WTC11 (cell line): ENCODE measurements at regions of chr10 and their contacts with region 1.

Region 1: DNA sequence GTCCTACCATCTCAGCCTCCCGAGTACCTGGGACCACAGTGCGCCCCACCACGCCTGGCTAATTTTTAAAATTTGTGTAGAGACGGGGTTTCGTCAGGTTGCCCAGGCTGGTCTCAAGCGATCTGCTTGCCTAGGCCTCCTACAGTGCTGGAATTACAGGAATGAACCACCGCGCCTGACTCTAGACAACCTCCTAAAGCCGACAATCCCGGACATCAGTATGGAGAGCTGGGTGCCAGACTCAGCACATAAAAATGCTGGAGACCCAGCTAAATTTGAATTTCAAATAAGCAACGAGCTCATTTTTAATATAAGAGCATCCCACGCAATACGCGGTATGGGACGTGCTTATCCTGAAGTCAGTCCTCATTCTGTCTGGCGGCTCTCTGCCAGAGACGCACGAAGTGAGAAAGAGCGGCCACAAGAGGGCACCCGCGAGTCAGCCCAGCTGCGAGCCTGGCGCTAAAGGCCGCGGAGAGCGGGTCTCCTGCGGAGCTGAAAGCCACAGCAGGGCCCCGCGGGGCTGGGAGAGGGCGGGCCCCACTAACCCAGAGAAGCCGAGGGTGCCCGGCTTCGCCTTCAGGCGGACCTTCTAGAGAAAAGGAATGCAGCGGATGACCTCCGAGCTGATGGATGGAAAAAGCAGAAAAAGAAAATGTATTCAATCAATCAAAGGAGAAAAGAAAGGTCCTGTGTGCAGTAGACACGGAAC is 7.0 kb downstream of the CALY start:
- DNase-seq: peak; percentile 90
- ATAC-seq: peak; percentile 81
- H3K4me3 Mint-ChIP-seq: peak overlapping the region; percentile 22
- H3K27ac Mint-ChIP-seq: no peak overlapping the region
- H3K4me1 Mint-ChIP-seq: peaks cover 14% of the 10 kb centered on the region
- H3K27me3 Mint-ChIP-seq: peaks cover 88% of the 10 kb centered on the region
- CTCF ChIP-seq: peak; percentile 95

Region 2: GRCh38 chr10:133210398-133211140 is 119.1 kb before region 1 on chr10:
- CTCF ChIA-PET with region 1: no interaction called
- POLR2A ChIA-PET with region 1: no interaction called
- DNase-seq: no peak
- ATAC-seq: no peak
- H3K4me3 Mint-ChIP-seq: no peak overlapping the region
- H3K27ac Mint-ChIP-seq: no peak overlapping the region
- H3K4me1 Mint-ChIP-seq: no peaks in the 10 kb centered on the region
- H3K27me3 Mint-ChIP-seq: no peaks in the 10 kb centered on the region
- CTCF ChIP-seq: no peak

Region 3: DNA sequence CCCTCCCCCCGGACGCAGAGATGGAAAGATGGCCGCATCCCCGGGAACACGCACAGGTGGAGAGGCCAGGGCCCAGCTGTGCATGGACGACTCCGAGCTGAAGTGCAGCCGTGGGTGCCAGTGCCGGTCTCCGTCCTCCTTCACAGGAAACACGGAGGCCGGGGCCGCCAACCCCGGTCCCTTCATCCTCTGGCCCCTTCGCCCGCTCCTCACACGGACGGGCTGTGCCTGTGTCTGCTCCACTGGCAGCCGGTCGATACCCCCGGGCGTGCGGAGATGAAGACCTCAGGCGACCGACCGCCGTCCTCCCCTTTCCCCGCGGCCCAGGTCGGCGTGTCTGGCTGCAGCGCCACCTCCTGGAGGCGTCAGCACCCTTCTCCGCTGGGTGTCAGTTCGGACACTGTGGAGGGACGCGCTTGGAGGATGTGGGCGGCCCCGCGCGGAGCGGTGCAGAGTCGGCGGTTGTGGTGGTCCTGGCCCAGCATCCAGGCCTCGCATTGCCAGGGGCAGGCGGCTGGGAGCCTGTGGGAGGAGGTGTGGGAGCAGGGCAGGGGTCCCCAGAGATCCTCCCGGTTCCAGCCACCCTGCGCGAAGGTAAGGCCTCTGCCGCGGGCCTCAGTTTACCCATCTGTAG is 11.0 kb before region 1 on chr10:
- CTCF ChIA-PET with region 1: interaction called, 20 read pairs
- POLR2A ChIA-PET with region 1: no interaction called
- DNase-seq: peak; percentile 86
- ATAC-seq: peak; percentile 98
- H3K4me3 Mint-ChIP-seq: peak overlapping the region; percentile 58
- H3K27ac Mint-ChIP-seq: no peak overlapping the region
- H3K4me1 Mint-ChIP-seq: 0 out of 2 replicates have a peak, but pooled peaks cover 3% of the 10 kb centered on the region
- H3K27me3 Mint-ChIP-seq: peaks cover 26% of the 10 kb centered on the region
- CTCF ChIP-seq: peak; percentile 74

Region 4: GRCh38 chr10:133351408-133352318 is 22.0 kb after region 1 on chr10:
- CTCF ChIA-PET with region 1: interaction called, 26 read pairs
- POLR2A ChIA-PET with region 1: no interaction called
- DNase-seq: peak; percentile 59
- ATAC-seq: peak; percentile 44
- H3K4me3 Mint-ChIP-seq: no peak overlapping the region
- H3K27ac Mint-ChIP-seq: no peak overlapping the region
- H3K4me1 Mint-ChIP-seq: peaks cover 4% of the 10 kb centered on the region
- H3K27me3 Mint-ChIP-seq: peaks cover 2% of the 10 kb centered on the region; the same call in 1 of the 2 replicates
- CTCF ChIP-seq: no peak

Region 5: GRCh38 chr10:133357285-133358151 is 27.9 kb after region 1 on chr10 and contains the start of gene FUOM:
- CTCF ChIA-PET with region 1: interaction called, 26 read pairs
- POLR2A ChIA-PET with region 1: no interaction called
- DNase-seq: peak; percentile 82
- ATAC-seq: peak; percentile 87
- H3K4me3 Mint-ChIP-seq: peak within 1 kb of the TSS; percentile 72
- H3K27ac Mint-ChIP-seq: no peak within 1 kb of the TSS
- H3K4me1 Mint-ChIP-seq: no peaks in the 10 kb centered on the region
- H3K27me3 Mint-ChIP-seq: peaks cover 12% of the 10 kb centered on the region
- CTCF ChIP-seq: no peak
- total RNA-seq, gene FUOM: 31.3 to 40.5 TPM (median 33.8 TPM) in 3 replicates

Region 6: GRCh38 chr10:133394064-133394663 is 64.5 kb after region 1 on chr10 and contains the start of gene MTG1:
- CTCF ChIA-PET with region 1: interaction called, 11 read pairs
- POLR2A ChIA-PET with region 1: no interaction called
- DNase-seq: peak; percentile 96
- ATAC-seq: peak; percentile 93
- H3K4me3 Mint-ChIP-seq: peak within 1 kb of the TSS; percentile 96
- H3K27ac Mint-ChIP-seq: peak within 1 kb of the TSS; percentile 97
- H3K4me1 Mint-ChIP-seq: peaks cover 11% of the 10 kb centered on the region
- H3K27me3 Mint-ChIP-seq: no peaks in the 10 kb centered on the region; the same call in 1 of the 2 replicates
- CTCF ChIP-seq: no peak
- total RNA-seq, gene MTG1: 51.8 to 63.0 TPM (median 53.0 TPM) in 3 replicates